ENCODE measurements at regions of chr12 and their contacts with region 1.

Region 1: DNA sequence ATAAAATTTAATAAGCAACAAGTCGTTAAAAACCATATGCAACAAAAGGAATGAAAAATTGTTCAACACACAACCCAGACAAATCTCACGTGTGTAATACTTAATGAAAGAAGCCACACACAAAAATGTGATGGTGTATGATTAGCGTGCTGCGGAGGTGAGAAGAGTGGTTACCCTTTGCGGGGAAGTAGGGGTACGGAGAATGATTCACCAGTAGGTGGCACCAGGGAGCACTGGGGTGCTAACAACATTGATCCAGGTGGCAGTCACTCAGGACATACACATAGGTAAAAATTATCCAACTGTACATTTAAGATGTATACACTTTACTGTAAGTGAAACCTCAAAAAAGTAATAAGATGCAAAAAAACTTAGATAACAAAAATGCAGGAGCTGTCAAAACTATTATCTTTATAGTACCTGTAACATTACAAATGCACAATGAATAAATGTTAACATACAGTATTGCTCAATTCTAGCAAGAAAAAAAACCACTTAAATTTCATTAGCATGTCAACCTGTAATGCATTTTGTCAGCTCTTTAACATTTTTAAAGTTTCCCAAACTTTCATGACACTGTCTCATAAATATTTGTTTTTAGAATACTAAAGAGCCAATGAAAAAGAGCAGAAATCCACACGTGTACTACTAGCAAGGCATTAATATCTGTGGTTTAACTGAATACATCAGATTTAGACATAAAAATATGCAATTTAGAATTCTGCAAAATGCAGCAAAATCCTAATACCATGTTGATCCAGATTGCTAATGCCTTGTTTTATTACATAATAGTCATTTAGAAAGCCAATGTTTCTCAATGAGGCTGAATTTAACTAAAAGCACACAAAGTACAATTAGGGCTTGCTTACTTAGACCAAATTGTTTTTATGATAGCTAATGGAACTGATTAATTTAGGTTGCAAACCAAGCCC is 46.7 kb downstream of the TMCC3 start:
- DNase-seq: peak; percentile 86
- H3K4me3 Mint-ChIP-seq: no peak overlapping the region
- H3K27ac Mint-ChIP-seq: no peak overlapping the region
- H3K4me1 Mint-ChIP-seq: no peaks in the 10 kb centered on the region
- H3K27me3 Mint-ChIP-seq: peaks cover 38% of the 10 kb centered on the region

Region 2: GRCh38 chr12:94644141-94644979 is 40.7 kb after region 1 on chr12:
- intact Hi-C with region 1: loop called (anchors 2 kb)
- DNase-seq: peak; percentile 70
- H3K4me3 Mint-ChIP-seq: peak overlapping the region; percentile 47
- H3K27ac Mint-ChIP-seq: peak overlapping the region; percentile 41
- H3K4me1 Mint-ChIP-seq: peaks cover 40% of the 10 kb centered on the region
- H3K27me3 Mint-ChIP-seq: peaks cover 64% of the 10 kb centered on the region

Region 3: DNA sequence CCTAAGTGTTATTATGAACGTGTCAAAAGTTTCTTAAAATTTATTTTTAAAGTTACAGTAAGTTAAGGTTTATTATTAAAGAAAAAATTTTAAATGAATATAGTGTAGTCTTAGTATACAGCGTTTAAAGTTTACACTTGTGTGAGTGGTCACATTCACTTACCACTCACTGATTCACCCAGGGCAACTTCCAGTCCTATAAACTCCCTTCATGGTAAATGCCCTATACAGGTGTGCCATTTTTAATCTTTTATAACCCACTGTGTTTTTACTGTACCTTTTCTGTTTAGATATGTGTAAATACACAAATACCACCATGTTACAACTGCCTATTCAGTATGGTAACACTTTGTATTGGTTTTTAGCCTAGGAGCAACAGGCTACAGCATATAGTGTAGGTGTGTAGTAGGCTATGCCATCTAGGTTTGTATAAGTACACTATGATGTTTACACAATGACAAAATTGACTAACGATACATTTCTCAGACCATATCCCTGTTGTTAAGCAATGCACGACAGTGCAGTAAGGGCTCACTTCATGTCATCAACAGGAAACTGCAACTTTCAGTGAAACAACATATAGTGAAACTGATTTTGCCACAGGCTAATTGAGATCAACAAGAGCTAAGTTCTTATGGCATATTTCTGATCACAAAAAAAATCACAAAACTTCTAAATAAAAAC is 158.7 kb after region 1 on chr12:
- intact Hi-C with region 1: loop called (anchors 1 kb)
- DNase-seq: no peak
- H3K4me3 Mint-ChIP-seq: no peak overlapping the region
- H3K27ac Mint-ChIP-seq: peak overlapping the region; percentile 20
- H3K4me1 Mint-ChIP-seq: peaks cover 13% of the 10 kb centered on the region
- H3K27me3 Mint-ChIP-seq: peaks cover 8% of the 10 kb centered on the region

Region 4: DNA sequence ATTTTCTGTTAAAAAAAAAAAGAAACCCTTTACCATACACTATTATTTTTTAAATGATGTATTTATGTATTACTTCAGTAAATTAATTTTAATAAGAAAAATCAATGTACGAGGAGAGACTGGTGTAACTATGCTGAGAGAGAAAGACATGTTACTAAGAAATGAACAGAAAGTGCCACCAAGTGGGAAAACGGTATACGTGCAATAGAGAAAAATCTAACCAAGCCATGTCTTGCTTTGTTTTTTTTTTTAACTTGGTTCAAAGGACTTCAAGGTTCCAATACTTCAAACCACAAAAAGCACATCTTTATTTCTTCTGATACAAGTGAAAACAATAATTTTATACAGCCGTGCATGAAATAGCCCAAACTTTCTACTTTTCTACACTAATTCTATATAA is 376.9 kb after region 1 on chr12:
- intact Hi-C with region 1: loop called (anchors 10 kb)
- DNase-seq: no peak
- H3K4me3 Mint-ChIP-seq: no peak overlapping the region
- H3K27ac Mint-ChIP-seq: no peak overlapping the region
- H3K4me1 Mint-ChIP-seq: peaks cover 13% of the 10 kb centered on the region
- H3K27me3 Mint-ChIP-seq: no peaks in the 10 kb centered on the region

Region 5: GRCh38 chr12:95532851-95533250 is 929.2 kb after region 1 on chr12:
- intact Hi-C with region 1: loop called (anchors 10 kb)
- DNase-seq: no peak
- H3K4me3 Mint-ChIP-seq: no peak overlapping the region
- H3K27ac Mint-ChIP-seq: no peak overlapping the region
- H3K4me1 Mint-ChIP-seq: peaks cover 10% of the 10 kb centered on the region
- H3K27me3 Mint-ChIP-seq: no peaks in the 10 kb centered on the region